Activated CD8-positive, alpha-beta memory T cell treated with anti-CD3 and anti-CD28 coated beads, Interleukin-2, amount 10 ng/mL, durations not matched to agents 7 days and 5 days (primary cell): ENCODE measurements at regions of chr22 and their contacts with region 1.

Region 1: DNA sequence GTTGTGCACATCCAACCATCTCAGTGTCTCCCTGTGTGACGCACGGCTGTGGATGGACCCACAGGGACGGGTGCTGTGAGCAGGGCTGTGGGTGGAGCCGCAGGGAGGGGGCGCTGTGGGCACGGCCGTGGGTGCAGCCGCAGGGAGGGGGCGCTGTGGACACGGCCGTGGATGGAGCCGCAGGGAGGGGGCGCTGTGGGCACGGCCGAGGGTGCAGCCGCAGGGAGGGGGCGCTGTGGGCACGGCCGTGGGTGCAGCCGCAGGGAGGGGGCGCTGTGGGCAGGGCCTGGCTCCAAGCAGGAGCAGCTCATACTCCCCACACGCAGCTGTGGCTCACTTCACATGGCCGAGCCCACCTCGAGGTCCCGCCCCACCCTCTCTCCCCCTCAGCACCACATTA is 6.0 kb upstream of the MAPK11 start:
- DNase-seq: peak; percentile 80
- ATAC-seq: peak; percentile 52
- H3K4me3 Mint-ChIP-seq: no peak overlapping the region
- H3K27ac Mint-ChIP-seq: no peak overlapping the region
- H3K4me1 Mint-ChIP-seq: peaks cover 4% of the 10 kb centered on the region
- H3K27me3 Mint-ChIP-seq: peaks cover 5% of the 10 kb centered on the region

Region 2: GRCh38 chr22:50141891-50142363 is 134.2 kb before region 1 on chr22:
- CTCF ChIA-PET with region 1: no interaction called
- DNase-seq: no peak
- ATAC-seq: no peak
- H3K4me3 Mint-ChIP-seq: no peak overlapping the region
- H3K27ac Mint-ChIP-seq: no peak overlapping the region
- H3K4me1 Mint-ChIP-seq: peaks cover 6% of the 10 kb centered on the region
- H3K27me3 Mint-ChIP-seq: peaks cover 44% of the 10 kb centered on the region

Region 3: DNA sequence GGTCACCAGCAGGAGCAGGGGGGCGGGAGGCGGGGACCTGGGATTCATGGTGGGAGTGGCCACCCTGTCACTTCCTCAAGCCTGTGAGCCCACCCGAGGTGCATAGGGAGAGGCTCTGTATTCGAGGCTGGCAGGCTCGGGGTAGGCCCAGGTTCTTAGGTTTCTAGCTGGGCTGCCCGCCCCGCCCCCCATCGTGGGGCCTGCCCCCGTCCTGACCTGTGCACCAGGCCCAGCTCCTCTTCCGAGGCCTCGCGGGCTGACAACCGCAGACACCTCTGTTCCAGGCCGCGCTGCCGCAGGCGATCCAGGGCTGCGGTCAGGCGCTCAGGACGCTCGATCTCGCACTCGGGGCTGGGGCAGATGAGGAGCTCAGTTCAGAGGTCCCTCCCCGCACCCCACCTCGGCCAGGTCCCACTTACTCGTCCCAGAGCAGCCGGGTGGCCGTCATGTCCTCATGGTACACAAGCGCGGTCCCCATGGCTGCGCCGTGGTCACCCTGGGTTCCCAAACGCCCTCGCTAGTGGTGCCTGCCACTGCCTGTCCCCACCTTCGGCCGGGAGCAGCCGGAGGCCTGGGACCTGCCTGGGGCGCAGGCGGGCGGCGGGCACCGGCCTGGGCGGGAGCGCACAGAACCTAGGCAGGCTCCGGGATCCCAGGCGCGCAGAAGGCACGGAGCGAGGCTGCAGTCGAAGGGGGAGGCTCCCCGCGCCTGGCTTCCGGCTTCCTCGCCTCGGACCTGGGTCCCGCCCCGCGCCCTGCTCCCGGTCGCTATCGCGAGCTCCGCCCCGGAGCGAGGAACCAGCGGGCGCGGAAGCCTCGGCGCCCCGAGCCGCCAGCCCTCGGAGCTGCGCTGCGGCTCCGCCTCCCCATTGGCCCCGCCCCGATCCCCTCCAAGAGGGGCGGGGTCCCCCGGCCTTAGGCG is 25.3 kb before region 1 on chr22 and contains the start of gene HDAC10:
- CTCF ChIA-PET with region 1: interaction called, 16 read pairs
- DNase-seq: peak; percentile 92
- ATAC-seq: peak; percentile 88
- H3K4me3 Mint-ChIP-seq: peak within 1 kb of the TSS; percentile 84
- H3K27ac Mint-ChIP-seq: peak within 1 kb of the TSS; percentile 85
- H3K4me1 Mint-ChIP-seq: peaks cover 27% of the 10 kb centered on the region
- H3K27me3 Mint-ChIP-seq: no peaks in the 10 kb centered on the region
- total RNA-seq, gene HDAC10: 75.2 to 96.3 TPM

Region 4: DNA sequence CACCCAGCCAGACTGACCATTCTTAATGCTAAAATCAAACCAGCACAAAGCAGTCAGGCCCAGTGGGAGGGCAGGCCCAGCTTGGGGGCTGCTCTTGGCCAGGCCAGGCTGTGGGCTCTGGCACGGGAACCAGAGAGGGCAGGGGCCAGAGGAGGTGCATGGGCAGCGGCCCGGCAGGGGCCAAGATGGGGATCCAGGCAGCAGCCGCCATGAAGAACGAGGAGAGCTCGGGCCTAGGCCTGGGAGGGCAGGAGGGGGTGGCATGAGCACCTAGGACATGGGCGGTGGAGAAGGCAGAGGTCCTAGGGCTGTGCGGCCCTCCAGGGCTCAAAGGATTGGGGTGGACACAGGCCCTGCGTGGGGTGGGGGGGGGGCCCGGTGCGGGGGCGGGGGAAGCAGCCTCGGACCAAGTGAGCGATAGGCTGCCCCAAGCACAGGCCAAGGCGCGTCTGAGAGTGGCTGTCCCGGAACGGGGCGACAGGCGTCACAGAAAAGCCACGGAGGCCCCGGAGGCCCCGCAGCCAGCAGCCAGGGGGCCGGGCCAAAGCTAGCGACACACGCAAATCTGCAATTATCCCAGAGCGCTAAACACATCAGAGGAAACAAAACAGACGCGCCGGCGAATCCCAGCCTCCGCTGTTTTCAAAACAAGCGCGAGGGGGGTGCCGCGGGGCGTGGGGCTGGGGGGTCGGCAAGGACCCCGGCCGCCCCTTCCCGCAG is 23.0 kb after region 1 on chr22:
- CTCF ChIA-PET with region 1: interaction called, 16 read pairs
- DNase-seq: no peak
- ATAC-seq: no peak
- H3K4me3 Mint-ChIP-seq: no peak overlapping the region
- H3K27ac Mint-ChIP-seq: no peak overlapping the region
- H3K4me1 Mint-ChIP-seq: peaks cover under 1% of the 10 kb centered on the region
- H3K27me3 Mint-ChIP-seq: peaks cover 4% of the 10 kb centered on the region

Region 5: GRCh38 chr22:50320671-50321325 is 44.7 kb after region 1 on chr22:
- CTCF ChIA-PET with region 1: interaction called, 105 read pairs
- DNase-seq: no peak
- ATAC-seq: no peak
- H3K4me3 Mint-ChIP-seq: no peak overlapping the region
- H3K27ac Mint-ChIP-seq: no peak overlapping the region
- H3K4me1 Mint-ChIP-seq: peaks cover 1% of the 10 kb centered on the region
- H3K27me3 Mint-ChIP-seq: peaks cover 1% of the 10 kb centered on the region

Region 6: DNA sequence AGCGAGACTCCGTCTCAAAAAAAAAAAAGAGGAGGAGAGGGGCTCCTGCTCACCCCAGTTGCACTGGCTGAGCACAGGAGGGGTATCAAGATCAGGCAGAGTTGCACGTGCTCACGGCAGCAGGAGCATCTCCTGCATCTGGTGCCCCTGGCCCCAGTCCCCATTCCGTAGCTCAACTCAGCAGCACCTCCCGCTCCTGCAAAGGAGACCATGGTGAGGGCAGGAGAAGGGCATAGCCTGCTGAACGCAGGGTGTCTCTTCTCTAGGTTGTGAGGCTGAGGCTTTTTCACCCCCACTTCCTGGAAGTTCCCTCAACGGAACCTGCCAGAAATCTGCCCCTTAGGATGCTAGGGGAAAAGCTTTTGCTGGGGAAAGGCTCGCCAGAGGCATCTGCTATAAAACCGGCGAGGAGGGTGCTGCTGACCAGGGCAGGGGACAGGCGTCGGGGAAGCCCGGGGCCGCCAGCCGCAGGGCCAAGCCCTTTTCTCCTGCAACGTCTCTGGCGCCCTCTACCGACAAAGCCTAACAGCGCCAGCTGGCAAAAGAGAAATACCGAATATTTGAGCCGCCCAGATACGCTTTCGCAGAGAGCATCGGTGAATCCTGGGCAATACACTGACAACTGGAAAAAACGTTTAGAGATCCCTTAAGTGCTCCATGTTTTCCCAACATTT is 66.0 kb after region 1 on chr22:
- CTCF ChIA-PET with region 1: interaction called, 68 read pairs
- DNase-seq: peak; percentile 93
- ATAC-seq: peak; percentile 58
- H3K4me3 Mint-ChIP-seq: peak overlapping the region; percentile 77
- H3K27ac Mint-ChIP-seq: peak overlapping the region; percentile 89
- H3K4me1 Mint-ChIP-seq: peaks cover 8% of the 10 kb centered on the region
- H3K27me3 Mint-ChIP-seq: no peaks in the 10 kb centered on the region